ENCODE measurements at regions of chr22 and their contacts with region 1.

Region 1: DNA sequence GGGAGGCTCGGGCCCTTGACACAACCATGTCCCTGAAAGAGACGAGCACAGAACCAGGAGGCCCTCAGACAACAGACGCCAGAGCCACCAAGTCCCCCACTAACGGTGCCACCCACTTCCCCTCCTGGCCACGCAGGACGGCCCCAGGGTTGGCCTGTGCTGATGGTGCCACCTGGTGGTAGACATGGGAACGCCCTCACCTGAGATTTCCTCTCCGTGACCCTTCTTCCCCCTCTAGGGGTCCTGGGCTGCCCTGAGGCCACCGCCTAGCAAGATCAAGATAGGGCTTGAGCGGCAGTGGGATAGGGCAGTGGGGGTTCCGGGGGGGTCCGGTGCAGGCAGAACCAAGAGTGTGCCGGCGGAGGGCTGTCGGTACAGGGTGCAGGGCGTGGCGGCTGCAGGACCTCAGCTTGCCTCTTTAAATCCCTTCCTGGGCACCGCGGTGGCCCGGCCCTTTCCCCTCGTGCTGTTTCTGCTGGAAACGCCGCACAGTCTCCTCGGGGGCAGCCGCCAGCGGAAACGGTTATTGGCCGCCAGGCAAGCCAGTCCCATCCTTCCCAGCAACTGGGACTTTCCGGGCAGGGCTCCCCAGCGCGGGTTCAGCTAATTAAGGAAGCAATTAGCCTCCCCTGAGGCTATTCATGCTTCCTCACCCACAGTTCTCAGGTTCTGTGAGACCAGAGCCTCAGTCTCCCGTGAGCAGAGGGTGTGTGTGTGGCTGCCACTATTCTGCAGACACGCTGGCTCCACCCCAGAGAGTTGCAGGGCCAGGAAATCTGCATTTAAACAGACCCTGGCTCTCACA is 5.5 kb upstream of the NFAM1 start:
- DNase-seq: peak; percentile 84
- ATAC-seq: peak; percentile 89

Region 2: DNA sequence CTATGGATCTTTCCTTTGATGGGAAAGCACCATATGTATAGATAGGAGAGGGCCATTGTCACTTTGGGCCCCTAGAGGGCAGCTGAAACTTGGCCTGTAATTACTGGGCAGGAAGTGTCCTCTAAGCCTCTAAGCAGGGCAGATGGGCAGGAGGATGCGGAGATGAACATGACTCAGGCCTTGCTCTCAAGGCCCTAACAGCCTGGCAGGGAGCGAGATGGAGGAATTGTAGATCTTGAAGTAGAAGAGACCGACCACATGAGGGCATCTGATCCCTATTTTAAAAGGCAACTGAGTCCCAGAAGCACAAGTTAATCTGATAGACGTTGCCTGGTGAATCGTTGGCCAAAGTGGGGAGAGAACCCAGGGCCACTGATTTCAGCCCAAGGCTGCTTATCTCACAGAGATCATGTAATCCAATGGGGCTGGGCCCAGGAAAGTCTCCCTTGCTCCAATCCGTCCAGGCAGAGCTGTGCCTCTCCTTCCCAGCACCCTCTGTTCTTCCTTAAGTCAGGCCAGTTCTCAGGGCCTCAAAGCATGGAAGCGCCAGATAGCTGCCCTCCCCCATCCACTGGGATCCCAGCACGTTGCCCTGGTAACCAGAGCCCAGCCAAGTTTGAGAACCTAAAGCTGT is 471.0 kb before region 1 on chr22:
- intact Hi-C with region 1: loop called (anchors 10 kb)
- DNase-seq: no peak
- ATAC-seq: peak; percentile 68

Region 3: GRCh38 chr22:42169055-42169469 is 268.6 kb before region 1 on chr22:
- intact Hi-C with region 1: loop called (anchors 1 kb)
- DNase-seq: peak; percentile 70
- ATAC-seq: peak; percentile 83

Region 4: GRCh38 chr22:42294034-42294985 is 143.4 kb before region 1 on chr22:
- intact Hi-C with region 1: loop called (anchors 10 kb)
- DNase-seq: peak; percentile 67
- ATAC-seq: peak; percentile 69